Naive thymus-derived CD4-positive, alpha-beta T cell (primary cell): ENCODE measurements at regions of chr16 and their contacts with region 1.

Region 1: DNA sequence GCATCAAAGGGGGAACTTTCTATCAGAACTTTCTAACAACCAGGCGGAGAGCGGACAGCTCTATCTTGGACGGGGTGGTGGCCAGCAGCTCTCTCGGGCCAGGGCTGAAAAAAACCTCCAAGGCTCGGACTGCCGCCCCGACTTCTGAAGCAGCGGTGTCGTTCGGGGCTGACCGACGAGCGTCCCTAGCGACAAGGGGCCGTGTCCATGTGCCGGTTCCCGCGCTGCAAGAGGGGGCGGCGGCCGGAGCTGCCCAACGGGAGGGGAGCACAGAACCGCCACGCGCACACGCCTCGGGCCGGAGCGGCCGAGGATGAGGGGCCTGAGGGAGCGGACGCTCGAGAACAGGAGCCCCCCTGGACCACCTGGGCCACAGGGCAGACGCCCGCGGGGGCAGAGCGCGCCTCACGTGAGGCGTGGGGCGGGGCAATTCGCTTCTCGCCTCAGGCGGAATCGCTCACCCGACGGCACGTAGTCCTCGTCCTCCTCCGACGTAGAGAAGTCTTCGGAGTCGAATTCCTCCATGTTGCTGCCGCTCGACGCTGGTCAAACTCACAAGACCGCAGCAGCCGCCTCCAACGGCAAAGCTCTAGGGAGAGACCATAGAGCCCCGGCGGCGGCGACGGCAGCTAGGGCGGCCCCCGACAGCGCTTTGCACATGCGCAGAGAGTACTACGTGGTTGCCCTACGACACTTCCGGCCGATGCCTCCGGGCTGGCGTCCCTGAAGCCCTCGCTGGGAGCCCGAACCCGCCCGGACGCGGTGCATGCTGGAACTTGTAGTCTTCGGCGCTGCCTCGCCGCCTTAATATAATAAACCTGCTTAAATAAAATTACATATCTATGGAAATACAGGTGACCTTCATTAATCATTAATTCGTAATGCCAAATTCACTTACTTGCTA is at the start of gene CFDP1:
- DNase-seq: peak; percentile 93 to 98 (median 95)
- ATAC-seq: peak; percentile 92
- H3K4me3 ChIP-seq: peak within 1 kb of the TSS; percentile 92
- H3K4me3 Mint-ChIP-seq: peak within 1 kb of the TSS; percentile 87 to 99 (median 94)
- H3K27ac ChIP-seq: peak within 1 kb of the TSS; percentile 94
- H3K27ac Mint-ChIP-seq: peak within 1 kb of the TSS; percentile 94 to 100 (median 97)
- H3K4me1 ChIP-seq: peaks cover 5 to 9% of the 10 kb centered on the region in 2 donors
- H3K4me1 Mint-ChIP-seq: peaks cover 19 to 53% (median 43%) of the 10 kb centered on the region in 7 donors
- H3K27me3 ChIP-seq: no peaks in the 10 kb centered on the region
- H3K27me3 Mint-ChIP-seq: no peaks in the 10 kb centered on the region
- total RNA-seq, gene CFDP1: 34.9 to 41.4 (median 39.4) TPM

Region 2: GRCh38 chr16:74296432-74297144 is 1136.5 kb before region 1 on chr16 and contains the start of gene PSMD7:
- CTCF ChIA-PET with region 1: no interaction called
- POLR2A ChIA-PET with region 1: no interaction called
- intact Hi-C with region 1: loop called in 1 of 2 experiments (anchors 2 kb)
- DNase-seq: peak; percentile 82 to 93 (median 90)
- ATAC-seq: peak; percentile 96
- H3K4me3 ChIP-seq: peak within 1 kb of the TSS; percentile 86
- H3K4me3 Mint-ChIP-seq: peak within 1 kb of the TSS; percentile 89 to 99 (median 96)
- H3K27ac ChIP-seq: peak within 1 kb of the TSS; percentile 96
- H3K27ac Mint-ChIP-seq: peak within 1 kb of the TSS; percentile 93 to 100 (median 98)
- H3K4me1 ChIP-seq: peaks cover 22 to 25% of the 10 kb centered on the region in 2 donors
- H3K4me1 Mint-ChIP-seq: peaks cover 21 to 52% (median 38%) of the 10 kb centered on the region in 7 donors
- H3K27me3 ChIP-seq: no peaks in the 10 kb centered on the region
- H3K27me3 Mint-ChIP-seq: no peaks in the 10 kb centered on the region
- total RNA-seq, gene PSMD7: 61.1 to 107 (median 71.3) TPM

Region 3: GRCh38 chr16:74709441-74709877 is 723.6 kb before region 1 on chr16:
- CTCF ChIA-PET with region 1: no interaction called
- POLR2A ChIA-PET with region 1: no interaction called
- intact Hi-C with region 1: loop called in 1 of 2 experiments (anchors 10 kb)
- DNase-seq: peak; percentile 62 to 86 (median 78)
- ATAC-seq: peak; percentile 99
- H3K4me3 ChIP-seq: no peak overlapping the region
- H3K4me3 Mint-ChIP-seq: no peak overlapping the region
- H3K27ac ChIP-seq: no peak overlapping the region
- H3K27ac Mint-ChIP-seq: peak overlapping the region in 5 of 9 donors; percentile 3 to 85 (median 29)
- H3K4me1 ChIP-seq: no peaks in the 10 kb centered on the region
- H3K4me1 Mint-ChIP-seq: peaks cover 4 to 10% (median 6%) of the 10 kb centered on the region in 7 donors
- H3K27me3 ChIP-seq: no peaks in the 10 kb centered on the region
- H3K27me3 Mint-ChIP-seq: peaks cover 0 to 6% (median 0%) of the 10 kb centered on the region in 5 donors

Region 4: GRCh38 chr16:75415169-75415905 is 17.7 kb before region 1 on chr16:
- CTCF ChIA-PET with region 1: interaction called, 4 read pairs
- POLR2A ChIA-PET with region 1: interaction called, 10 read pairs
- intact Hi-C with region 1: no loop called
- DNase-seq: no peak
- ATAC-seq: no peak
- H3K4me3 ChIP-seq: no peak overlapping the region
- H3K4me3 Mint-ChIP-seq: no peak overlapping the region
- H3K27ac ChIP-seq: no peak overlapping the region
- H3K27ac Mint-ChIP-seq: peak overlapping the region in 5 of 9 donors; percentile 9 to 63 (median 21)
- H3K4me1 ChIP-seq: no peaks in the 10 kb centered on the region
- H3K4me1 Mint-ChIP-seq: peaks cover 5 to 51% (median 24%) of the 10 kb centered on the region in 7 donors
- H3K27me3 ChIP-seq: no peaks in the 10 kb centered on the region
- H3K27me3 Mint-ChIP-seq: no peaks in the 10 kb centered on the region

Region 5: DNA sequence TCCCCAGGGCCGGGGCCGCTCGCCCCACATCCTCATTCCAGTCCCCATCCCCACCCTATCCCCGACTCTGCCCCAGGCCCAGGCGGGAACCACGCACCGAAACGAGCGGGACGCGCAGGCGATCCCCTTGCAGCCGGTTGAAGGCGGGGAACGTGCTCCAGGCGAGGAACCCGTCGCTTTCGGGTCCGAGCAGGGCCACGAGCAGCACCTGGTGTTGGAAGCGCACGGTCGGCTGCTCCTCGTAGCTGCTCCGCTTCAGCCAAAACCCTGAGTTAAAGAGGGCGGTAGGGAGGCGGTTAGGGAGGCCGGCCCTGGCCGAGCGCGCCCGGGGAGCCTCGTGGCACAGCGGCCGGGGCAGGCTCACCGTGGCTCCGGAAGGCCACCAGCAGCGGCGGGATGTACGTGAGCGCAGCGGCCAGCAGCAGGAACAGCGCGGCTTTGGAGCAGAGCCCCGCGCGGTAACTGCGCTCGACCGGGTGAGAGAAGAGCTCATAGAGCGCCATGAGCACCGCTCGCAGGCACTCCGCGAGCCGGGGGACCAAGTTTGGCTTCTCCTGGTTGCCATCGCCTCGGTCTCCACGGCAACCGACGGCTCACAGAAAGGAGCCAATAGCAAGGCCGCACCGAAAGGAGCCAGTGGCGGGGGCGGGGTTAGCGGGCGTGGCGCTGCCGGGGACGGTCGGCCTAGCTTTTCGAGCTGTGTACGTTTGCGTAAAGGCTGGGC is 122.8 kb after region 1 on chr16 and contains the start of gene TMEM231:
- CTCF ChIA-PET with region 1: no interaction called
- POLR2A ChIA-PET with region 1: interaction called, 4 read pairs
- intact Hi-C with region 1: loop called (anchors 1 kb)
- DNase-seq: peak; percentile 91 to 97 (median 93)
- ATAC-seq: peak; percentile 98
- H3K4me3 ChIP-seq: peak within 1 kb of the TSS; percentile 84
- H3K4me3 Mint-ChIP-seq: peak within 1 kb of the TSS; percentile 74 to 93 (median 88)
- H3K27ac ChIP-seq: peak within 1 kb of the TSS; percentile 66
- H3K27ac Mint-ChIP-seq: peak within 1 kb of the TSS; percentile 81 to 97 (median 89)
- H3K4me1 ChIP-seq: peaks cover 10% of the 10 kb centered on the region in 2 donors
- H3K4me1 Mint-ChIP-seq: peaks cover 5 to 14% (median 10%) of the 10 kb centered on the region in 7 donors
- H3K27me3 ChIP-seq: no peaks in the 10 kb centered on the region
- H3K27me3 Mint-ChIP-seq: peaks cover 0 to 33% (median 5%) of the 10 kb centered on the region in 5 donors
- total RNA-seq, gene TMEM231: 1.5 to 3.9 (median 3.4) TPM

Region 6: GRCh38 chr16:77190478-77191258 is 1757.6 kb after region 1 on chr16 and contains the start of gene MON1B:
- CTCF ChIA-PET with region 1: no interaction called
- POLR2A ChIA-PET with region 1: interaction called, 3 read pairs
- intact Hi-C with region 1: loop called in 1 of 2 experiments (anchors 1 kb)
- DNase-seq: peak; percentile 86 to 98 (median 97)
- ATAC-seq: peak; percentile 96
- H3K4me3 ChIP-seq: peak within 1 kb of the TSS; percentile 97
- H3K4me3 Mint-ChIP-seq: peak within 1 kb of the TSS; percentile 90 to 99 (median 96)
- H3K27ac ChIP-seq: peak within 1 kb of the TSS; percentile 86
- H3K27ac Mint-ChIP-seq: peak within 1 kb of the TSS; percentile 98 to 100 (median 100)
- H3K4me1 ChIP-seq: peaks cover 13 to 23% of the 10 kb centered on the region in 2 donors
- H3K4me1 Mint-ChIP-seq: peaks cover 36 to 55% (median 46%) of the 10 kb centered on the region in 7 donors
- H3K27me3 ChIP-seq: no peaks in the 10 kb centered on the region
- H3K27me3 Mint-ChIP-seq: peaks cover 0 to 10% (median 4%) of the 10 kb centered on the region in 5 donors
- total RNA-seq, gene MON1B: 60.8 to 87.2 (median 67.3) TPM